HCT116 (cell line): ENCODE measurements at regions of chr14 and their contacts with region 1.

Region 1: GRCh38 chr14:80996049-80996901 is 40.9 kb downstream of the TSHR start:
- DNase-seq: peak; percentile 66
- ATAC-seq: peak; percentile 99
- H3K4me3 ChIP-seq: peak overlapping the region in 1 of 2 experiments; percentile 10; a peak in 1 of 4 replicates
- H3K27ac ChIP-seq: no peak overlapping the region
- H3K4me1 ChIP-seq: peaks cover 0 to 2% of the 10 kb centered on the region in 2 experiments; a peak in 1 of 4 replicates
- H3K27me3 ChIP-seq: peaks cover 10% of the 10 kb centered on the region; the same call in 1 of the 2 replicates
- CTCF ChIP-seq: peak; percentile 63 to 75 (median 69); a peak in 5 of 6 replicates
- POLR2A ChIP-seq: no peak
- RAD21 ChIP-seq: peak; percentile 61

Region 2: GRCh38 chr14:80055667-80056496 is 940.4 kb before region 1 on chr14:
- CTCF ChIA-PET with region 1: no interaction called
- POLR2A ChIA-PET with region 1: no interaction called
- RAD21 ChIA-PET with region 1: no interaction called
- intact Hi-C with region 1: loop called (anchors 10 kb)
- DNase-seq: no peak
- ATAC-seq: peak; percentile 40; the same call in 1 of the 2 replicates
- H3K4me3 ChIP-seq: no peak overlapping the region
- H3K27ac ChIP-seq: no peak overlapping the region
- H3K4me1 ChIP-seq: no peaks in the 10 kb centered on the region
- H3K27me3 ChIP-seq: no peaks in the 10 kb centered on the region
- CTCF ChIP-seq: peak; percentile 18 to 50 (median 50); a peak in 4 of 6 replicates
- POLR2A ChIP-seq: no peak
- RAD21 ChIP-seq: peak; percentile 49

Region 3: DNA sequence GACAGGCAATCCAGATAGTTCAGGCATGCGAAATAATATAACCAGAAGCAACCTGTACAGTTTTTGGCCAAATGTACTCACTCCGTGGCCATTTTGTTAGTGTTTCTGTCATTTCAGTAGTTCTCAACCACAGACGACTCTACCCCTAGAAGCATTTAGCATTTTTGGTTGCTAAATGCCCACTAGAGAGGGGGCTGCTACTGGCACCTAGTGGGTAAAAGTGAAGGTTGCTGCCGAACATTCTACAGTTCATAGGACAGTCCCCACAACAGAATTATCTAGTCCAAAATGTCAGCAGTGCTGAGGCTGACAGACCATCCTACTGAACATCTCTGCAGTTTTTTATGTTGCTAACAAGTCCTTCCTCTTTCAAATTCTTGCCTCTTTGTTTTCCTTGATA is 66.5 kb after region 1 on chr14:
- CTCF ChIA-PET with region 1: interaction called, 13 read pairs
- POLR2A ChIA-PET with region 1: no interaction called
- RAD21 ChIA-PET with region 1: no interaction called
- intact Hi-C with region 1: loop called (anchors 1 kb)
- DNase-seq: peak; percentile 21
- ATAC-seq: peak; percentile 93
- H3K4me3 ChIP-seq: no peak overlapping the region
- H3K27ac ChIP-seq: no peak overlapping the region
- H3K4me1 ChIP-seq: no peaks in the 10 kb centered on the region
- H3K27me3 ChIP-seq: no peaks in the 10 kb centered on the region
- CTCF ChIP-seq: peak; percentile 35 to 67 (median 65); a peak in 5 of 6 replicates
- POLR2A ChIP-seq: no peak
- RAD21 ChIP-seq: peak; percentile 52

Region 4: GRCh38 chr14:81164167-81164774 is 168.0 kb after region 1 on chr14:
- CTCF ChIA-PET with region 1: interaction called, 36 read pairs
- POLR2A ChIA-PET with region 1: no interaction called
- RAD21 ChIA-PET with region 1: interaction called in 1 of 2 experiments, 7 read pairs
- intact Hi-C with region 1: loop called (anchors 1 kb)
- DNase-seq: peak; percentile 83
- ATAC-seq: peak; percentile 99
- H3K4me3 ChIP-seq: no peak overlapping the region
- H3K27ac ChIP-seq: no peak overlapping the region
- H3K4me1 ChIP-seq: peaks cover 0 to 19% of the 10 kb centered on the region in 2 experiments; a peak in 3 of 4 replicates
- H3K27me3 ChIP-seq: no peaks in the 10 kb centered on the region
- CTCF ChIP-seq: peak; percentile 51 to 89 (median 85); a peak in 5 of 6 replicates
- POLR2A ChIP-seq: no peak
- RAD21 ChIP-seq: peak; percentile 78

Region 5: DNA sequence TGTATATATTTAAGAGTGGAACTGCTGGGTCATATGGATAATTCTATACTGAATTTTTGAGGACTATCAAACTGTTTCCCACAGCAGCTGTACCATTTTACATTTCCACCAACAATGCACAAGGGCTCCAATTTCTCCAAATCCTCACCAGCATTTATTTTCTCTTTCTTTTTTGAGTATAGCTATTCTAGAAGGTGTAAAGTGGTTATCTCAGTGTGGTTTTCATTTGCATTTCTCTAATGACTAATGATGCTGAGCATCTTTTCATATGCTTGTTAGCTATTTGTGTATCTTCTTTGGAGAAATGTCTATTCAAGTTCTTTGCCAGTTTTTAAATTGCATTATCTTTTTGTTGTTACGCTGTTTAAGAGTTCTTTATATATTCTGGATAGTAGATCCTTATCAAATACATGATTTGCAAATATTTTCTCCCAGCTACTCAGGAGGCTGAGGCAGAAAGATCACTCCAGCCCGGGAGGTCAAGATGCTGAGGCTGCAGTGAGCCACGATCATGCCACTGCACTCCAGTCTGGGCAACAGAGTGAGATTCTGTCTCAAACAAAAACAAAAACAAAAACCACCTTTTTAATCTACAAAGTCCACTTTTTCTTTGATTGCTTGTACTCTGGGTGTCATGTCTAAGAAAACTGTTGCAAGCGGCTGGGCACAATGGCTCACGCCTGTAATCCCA is 191.7 kb after region 1 on chr14:
- CTCF ChIA-PET with region 1: no interaction called
- POLR2A ChIA-PET with region 1: no interaction called
- RAD21 ChIA-PET with region 1: no interaction called
- intact Hi-C with region 1: no loop called
- DNase-seq: no peak
- ATAC-seq: no peak
- H3K4me3 ChIP-seq: no peak overlapping the region
- H3K27ac ChIP-seq: no peak overlapping the region
- H3K4me1 ChIP-seq: no peaks in the 10 kb centered on the region
- H3K27me3 ChIP-seq: no peaks in the 10 kb centered on the region
- CTCF ChIP-seq: no peak
- POLR2A ChIP-seq: no peak
- RAD21 ChIP-seq: no peak

Region 6: DNA sequence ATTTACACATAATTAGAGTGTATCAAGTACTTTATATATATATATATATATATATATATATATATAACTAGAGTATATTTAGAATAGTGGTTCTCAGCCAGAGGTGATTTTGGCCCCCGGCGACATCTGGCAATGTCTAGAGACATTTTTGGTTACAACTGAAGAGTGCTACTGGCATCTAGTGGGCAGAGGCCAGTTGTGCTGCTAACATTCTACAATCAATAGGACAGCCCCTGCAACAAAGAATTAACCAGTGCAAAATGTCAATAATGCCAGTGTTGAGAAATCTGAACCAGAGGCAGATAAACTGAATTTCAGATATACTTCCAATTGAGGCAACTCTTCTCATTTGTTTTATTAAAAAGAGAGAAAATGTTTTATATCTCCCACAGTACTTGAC is 215.6 kb after region 1 on chr14:
- CTCF ChIA-PET with region 1: interaction called, 4 read pairs
- POLR2A ChIA-PET with region 1: no interaction called
- RAD21 ChIA-PET with region 1: no interaction called
- intact Hi-C with region 1: loop called (anchors 2 kb)
- DNase-seq: no peak
- ATAC-seq: peak; percentile 77
- H3K4me3 ChIP-seq: no peak overlapping the region
- H3K27ac ChIP-seq: no peak overlapping the region
- H3K4me1 ChIP-seq: no peaks in the 10 kb centered on the region
- H3K27me3 ChIP-seq: no peaks in the 10 kb centered on the region
- CTCF ChIP-seq: peak; percentile 13 to 49 (median 47); a peak in 4 of 6 replicates
- POLR2A ChIP-seq: no peak
- RAD21 ChIP-seq: peak; percentile 47

Region 7: DNA sequence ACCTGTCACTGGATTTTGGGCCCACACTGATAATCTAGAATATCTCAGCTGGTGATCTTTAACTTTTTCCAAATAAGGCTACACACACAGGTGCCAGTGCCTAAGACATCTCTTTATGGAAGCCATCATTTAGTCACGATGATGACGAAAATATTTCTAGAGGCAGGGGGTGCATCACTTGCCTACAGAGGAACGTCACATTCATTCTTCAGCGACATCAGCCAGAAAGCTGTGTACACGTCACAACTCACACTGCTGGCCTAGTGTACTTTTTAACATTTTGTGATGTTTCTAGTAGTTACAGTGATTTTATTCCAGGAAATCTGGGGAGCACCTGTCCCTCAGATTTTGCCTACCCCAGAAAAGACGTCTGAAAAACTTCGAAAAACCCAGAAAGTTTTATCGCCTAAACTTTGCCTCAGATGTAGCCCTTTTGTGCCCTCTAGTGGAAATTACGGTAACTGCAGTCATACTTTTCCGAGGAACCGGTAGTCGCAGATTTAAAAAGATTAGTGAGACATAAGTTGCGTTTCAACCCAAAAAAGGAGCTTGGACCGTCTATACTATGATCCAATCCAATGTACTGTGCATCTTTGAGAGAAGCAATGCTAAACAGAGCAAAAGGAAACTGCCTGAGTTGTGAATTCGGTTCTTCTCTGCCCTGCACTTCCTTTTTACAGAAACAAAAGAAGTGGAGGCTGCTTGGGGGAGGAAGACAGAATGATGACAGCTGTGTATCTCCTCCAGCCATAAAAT is 468.1 kb after region 1 on chr14:
- CTCF ChIA-PET with region 1: interaction called, 12 read pairs
- POLR2A ChIA-PET with region 1: no interaction called
- RAD21 ChIA-PET with region 1: no interaction called
- intact Hi-C with region 1: loop called (anchors 1 kb)
- DNase-seq: peak; percentile 40
- ATAC-seq: peak; percentile 67
- H3K4me3 ChIP-seq: peak overlapping the region; percentile 32 to 49
- H3K27ac ChIP-seq: no peak overlapping the region
- H3K4me1 ChIP-seq: peaks cover 0 to 16% of the 10 kb centered on the region in 2 experiments; a peak in 3 of 4 replicates
- H3K27me3 ChIP-seq: no peaks in the 10 kb centered on the region
- CTCF ChIP-seq: peak; percentile 67 to 95 (median 76)
- POLR2A ChIP-seq: no peak
- RAD21 ChIP-seq: peak; percentile 82